ENCODE measurements at regions of chr14 and their contacts with region 1.

Region 1: GRCh38 chr14:92135267-92135666 is 13.5 kb downstream of the CPSF2 start:
- DNase-seq: peak; percentile 26
- H3K4me3 ChIP-seq: no peak overlapping the region
- H3K27ac ChIP-seq: no peak overlapping the region
- H3K4me1 ChIP-seq: no peaks in the 10 kb centered on the region
- H3K27me3 ChIP-seq: no peaks in the 10 kb centered on the region
- CTCF ChIP-seq: peak; percentile 57

Region 2: DNA sequence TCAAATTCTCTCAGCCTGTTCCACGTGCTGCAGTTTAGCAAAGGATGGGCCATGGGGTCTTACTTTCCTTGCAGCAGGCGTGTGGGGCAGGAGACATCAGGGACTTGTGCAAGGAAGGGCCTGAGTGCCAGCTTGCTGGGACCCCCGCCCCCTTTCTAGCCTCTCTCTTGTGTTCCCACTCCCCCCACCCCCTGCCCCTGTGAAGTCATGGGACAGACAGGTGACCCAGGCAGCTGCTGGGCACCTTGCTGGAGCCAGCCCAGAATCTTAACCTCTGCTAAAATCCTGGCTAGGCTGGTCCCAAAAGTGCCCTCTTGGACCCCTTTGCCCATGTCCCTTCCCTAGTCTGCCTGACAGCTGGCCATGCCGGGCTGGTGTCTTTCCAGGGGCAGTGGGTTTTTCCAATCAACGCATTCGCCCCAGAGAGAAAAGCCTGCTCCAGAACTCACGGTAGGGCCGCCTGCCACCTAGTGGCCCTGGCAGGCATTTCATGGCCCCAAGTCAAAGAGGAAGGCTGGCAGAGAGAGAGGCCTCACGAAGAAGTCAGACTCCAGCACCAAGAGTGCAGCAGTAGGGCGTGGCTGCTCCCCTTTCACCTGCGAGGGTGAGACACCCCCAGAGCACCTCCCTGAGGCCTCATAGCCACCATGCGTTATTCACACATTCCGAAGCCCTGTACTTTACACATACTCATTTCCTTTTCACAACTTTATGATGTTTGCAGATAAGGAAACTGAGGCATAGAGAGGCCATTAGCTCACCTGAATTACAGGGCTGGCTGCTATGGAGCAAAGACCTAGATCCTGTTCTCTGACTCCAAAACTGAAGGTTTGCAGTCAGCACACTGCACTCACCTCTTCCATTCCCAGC is 545.7 kb after region 1 on chr14:
- CTCF ChIA-PET with region 1: no interaction called
- POLR2A ChIA-PET with region 1: no interaction called
- intact Hi-C with region 1: loop called (anchors 5 kb)
- DNase-seq: peak; percentile 81
- H3K4me3 ChIP-seq: no peak overlapping the region
- H3K27ac ChIP-seq: no peak overlapping the region
- H3K4me1 ChIP-seq: no peaks in the 10 kb centered on the region
- H3K27me3 ChIP-seq: no peaks in the 10 kb centered on the region
- CTCF ChIP-seq: peak; percentile 90